Activated T-helper 2 cell treated with anti-CD3 and anti-CD28 coated beads, Interferon-gamma antibody, Interleukin-2, Interleukin-4, amounts not matched to agents 10 μg/mL and 5 μg/mL and 100 μg/mL, durations not matched to agents 14 hours and 24 hours and 36 hours (primary cell): ENCODE measurements at regions of chrX and their contacts with region 1.

Region 1: GRCh38 chrX:40468033-40468846 is 112.5 kb upstream of the ATP6AP2 start:
- DNase-seq: no peak
- H3K4me3 Mint-ChIP-seq: peak overlapping the region; percentile 30
- H3K27ac Mint-ChIP-seq: peak overlapping the region; percentile 38
- H3K4me1 Mint-ChIP-seq: peaks cover 31% of the 10 kb centered on the region
- H3K27me3 Mint-ChIP-seq: peaks cover 13% of the 10 kb centered on the region

Region 2: GRCh38 chrX:40175511-40176350 is 292.5 kb before region 1 on chrX:
- intact Hi-C with region 1: loop called (anchors 1 kb)
- DNase-seq: peak; percentile 73
- H3K4me3 Mint-ChIP-seq: peak overlapping the region; percentile 86
- H3K27ac Mint-ChIP-seq: peak overlapping the region; percentile 96
- H3K4me1 Mint-ChIP-seq: peaks cover 27% of the 10 kb centered on the region
- H3K27me3 Mint-ChIP-seq: no peaks in the 10 kb centered on the region

Region 3: DNA sequence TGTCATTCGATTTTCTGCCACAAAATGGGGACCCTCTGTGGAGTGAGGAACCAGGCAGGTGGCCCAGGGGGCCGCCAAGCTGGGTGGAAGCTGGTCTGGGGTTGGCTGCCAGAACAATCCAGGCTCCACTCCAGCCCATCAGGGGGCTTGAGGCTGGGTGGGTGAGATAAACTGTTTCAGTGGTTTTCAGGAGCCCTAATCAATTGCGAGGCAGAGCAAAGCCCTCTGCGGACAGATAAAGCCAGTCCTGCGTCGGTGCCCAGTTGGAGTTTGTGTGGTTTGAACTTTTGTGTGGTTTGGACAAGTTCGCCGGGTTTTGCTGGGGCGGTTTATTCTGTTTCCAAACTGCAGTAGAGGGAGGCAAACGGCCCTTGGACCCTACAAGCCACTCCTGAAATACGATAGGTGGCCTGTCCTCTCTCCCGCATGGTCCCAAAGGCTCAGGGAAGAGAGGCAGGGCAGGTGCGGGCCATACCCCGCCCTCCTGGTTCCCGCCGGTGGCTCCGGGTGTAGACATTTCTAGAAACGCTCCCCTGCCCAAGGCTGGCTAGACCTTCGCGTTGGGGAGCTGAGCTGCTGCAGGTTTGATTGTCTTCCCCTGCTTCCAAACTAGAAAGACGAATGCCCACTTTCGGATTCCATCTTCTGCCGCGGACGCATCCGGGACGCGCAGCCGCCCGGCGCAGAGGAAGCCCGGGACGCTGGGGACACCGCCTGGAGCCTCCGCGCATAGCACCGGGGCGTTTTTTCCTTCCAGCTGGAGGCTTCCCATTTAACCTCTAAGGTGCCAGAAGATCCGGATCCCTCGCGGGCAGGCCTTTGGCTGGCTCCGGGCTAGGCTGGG is 201.5 kb before region 1 on chrX:
- intact Hi-C with region 1: loop called (anchors 10 kb)
- DNase-seq: peak; percentile 22
- H3K4me3 Mint-ChIP-seq: peak overlapping the region; percentile 68
- H3K27ac Mint-ChIP-seq: no peak overlapping the region
- H3K4me1 Mint-ChIP-seq: peaks cover 2% of the 10 kb centered on the region
- H3K27me3 Mint-ChIP-seq: peaks cover 1% of the 10 kb centered on the region

Region 4: GRCh38 chrX:40420899-40421729 is 47.1 kb before region 1 on chrX:
- intact Hi-C with region 1: loop called (anchors 5 kb)
- DNase-seq: no peak
- H3K4me3 Mint-ChIP-seq: no peak overlapping the region
- H3K27ac Mint-ChIP-seq: peak overlapping the region; percentile 42
- H3K4me1 Mint-ChIP-seq: peaks cover 23% of the 10 kb centered on the region
- H3K27me3 Mint-ChIP-seq: no peaks in the 10 kb centered on the region